ENCODE measurements at regions of chr2 and their contacts with region 1.

Region 1: DNA sequence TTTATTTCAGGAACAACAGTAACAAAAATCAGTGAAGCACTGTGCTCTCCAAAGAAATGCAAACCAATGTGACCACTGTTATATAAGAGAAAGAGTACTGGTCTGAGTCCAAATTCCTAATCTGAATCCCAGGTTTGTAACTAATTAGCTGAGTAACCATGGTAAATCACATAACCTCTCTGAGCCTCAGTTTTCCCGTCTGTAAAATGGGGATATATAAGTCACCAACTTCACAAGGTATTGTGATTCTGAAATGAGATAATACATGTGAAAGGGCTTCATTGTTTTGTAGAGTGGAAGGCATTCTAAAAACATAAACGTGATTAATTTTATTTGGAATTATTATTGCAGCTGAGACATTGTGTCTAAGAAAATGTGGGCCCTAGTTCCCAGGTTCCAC is 91.3 kb upstream of the YPEL5 start:
- DNase-seq: no peak
- H3K4me3 ChIP-seq: no peak overlapping the region
- H3K27ac ChIP-seq: no peak overlapping the region
- H3K4me1 ChIP-seq: no peaks in the 10 kb centered on the region
- H3K27me3 ChIP-seq: no peaks in the 10 kb centered on the region
- CTCF ChIP-seq: no peak
- EP300 ChIP-seq: no peak
- POLR2A ChIP-seq: no peak
- RAD21 ChIP-seq: no peak

Region 2: GRCh38 chr2:30072250-30072842 is 16.8 kb after region 1 on chr2:
- CTCF ChIA-PET with region 1: interaction called, 12 read pairs
- POLR2A ChIA-PET with region 1: no interaction called
- DNase-seq: peak; percentile 36 to 83
- H3K4me3 ChIP-seq: no peak overlapping the region
- H3K27ac ChIP-seq: no peak overlapping the region
- H3K4me1 ChIP-seq: peaks cover 0 to 3% (median 0%) of the 10 kb centered on the region in 4 experiments; a peak in 1 of 7 replicates
- H3K27me3 ChIP-seq: no peaks in the 10 kb centered on the region
- CTCF ChIP-seq: peak; percentile 69 to 95 (median 79)
- EP300 ChIP-seq: no peak
- POLR2A ChIP-seq: no peak
- RAD21 ChIP-seq: peak; percentile 93

Measured in H1 (cell line).